ENCODE measurements at regions of chr2 and their contacts with region 1.

Region 1: GRCh38 chr2:25376750-25377621 is 35.3 kb upstream of the DNMT3A start:
- DNase-seq: peak; percentile 90
- ATAC-seq: peak; percentile 98
- H3K4me3 Mint-ChIP-seq: peak overlapping the region; percentile 73
- H3K27ac Mint-ChIP-seq: peak overlapping the region; percentile 90
- H3K4me1 Mint-ChIP-seq: peaks cover 35% of the 10 kb centered on the region
- H3K27me3 Mint-ChIP-seq: no peaks in the 10 kb centered on the region
- CTCF ChIP-seq: no peak

Region 2: DNA sequence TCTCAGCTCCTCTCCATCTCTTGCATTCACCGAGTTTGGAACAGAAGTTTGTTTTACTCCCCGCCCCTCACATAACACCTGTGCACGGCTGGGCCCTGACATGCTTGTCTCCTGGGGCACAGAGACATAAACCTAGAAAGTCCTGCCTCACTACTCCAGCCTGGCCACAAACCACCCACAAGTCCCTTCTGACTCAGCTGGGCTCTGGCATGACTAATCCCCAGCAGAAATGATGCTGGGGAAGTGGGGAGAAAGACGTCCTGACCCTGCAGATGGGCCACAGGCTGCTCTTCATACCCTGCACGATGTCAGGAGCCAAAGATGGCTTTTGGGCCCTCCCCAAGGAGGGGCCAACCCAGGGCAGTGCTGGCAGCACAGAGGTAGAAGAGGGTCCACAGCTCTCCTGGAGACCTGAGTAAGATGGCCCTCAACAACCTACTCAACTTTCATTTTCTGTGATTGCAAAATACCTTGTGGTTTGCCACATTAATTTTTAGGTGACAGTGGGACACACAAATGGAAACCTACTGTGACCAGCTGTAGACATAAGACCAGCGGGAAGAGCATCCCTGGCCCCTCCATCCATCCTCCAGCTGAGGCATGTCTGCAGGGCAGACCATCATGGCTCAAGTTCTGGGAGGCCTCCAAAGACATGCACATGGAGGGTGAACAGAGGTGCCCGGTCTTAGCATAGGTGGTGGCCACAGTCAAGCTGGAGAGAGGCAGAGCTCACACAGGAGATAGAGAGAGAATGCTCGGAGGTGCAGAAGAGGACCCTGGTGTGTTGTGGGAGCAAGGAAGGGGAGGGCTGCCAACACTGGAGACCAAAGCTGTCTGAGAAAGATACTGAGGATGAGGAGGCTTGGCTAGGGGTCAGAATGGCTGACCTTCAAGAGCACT is 75.3 kb before region 1 on chr2:
- CTCF ChIA-PET with region 1: interaction called, 4 read pairs
- POLR2A ChIA-PET with region 1: interaction called, 3 read pairs
- intact Hi-C with region 1: loop called (anchors 2 kb)
- DNase-seq: peak; percentile 61
- ATAC-seq: peak; percentile 95
- H3K4me3 Mint-ChIP-seq: peak overlapping the region; percentile 42
- H3K27ac Mint-ChIP-seq: peak overlapping the region; percentile 46
- H3K4me1 Mint-ChIP-seq: peaks cover 39% of the 10 kb centered on the region
- H3K27me3 Mint-ChIP-seq: no peaks in the 10 kb centered on the region
- CTCF ChIP-seq: no peak

Region 3: GRCh38 chr2:25342372-25343186 is 34.4 kb before region 1 on chr2:
- CTCF ChIA-PET with region 1: interaction called, 11 read pairs
- POLR2A ChIA-PET with region 1: interaction called, 7 read pairs
- intact Hi-C with region 1: loop called (anchors 1 kb)
- DNase-seq: peak; percentile 82
- ATAC-seq: peak; percentile 92
- H3K4me3 Mint-ChIP-seq: peak overlapping the region; percentile 84
- H3K27ac Mint-ChIP-seq: peak overlapping the region; percentile 59
- H3K4me1 Mint-ChIP-seq: peaks cover 19% of the 10 kb centered on the region
- H3K27me3 Mint-ChIP-seq: peaks cover 1% of the 10 kb centered on the region
- CTCF ChIP-seq: peak; percentile 74

Region 4: DNA sequence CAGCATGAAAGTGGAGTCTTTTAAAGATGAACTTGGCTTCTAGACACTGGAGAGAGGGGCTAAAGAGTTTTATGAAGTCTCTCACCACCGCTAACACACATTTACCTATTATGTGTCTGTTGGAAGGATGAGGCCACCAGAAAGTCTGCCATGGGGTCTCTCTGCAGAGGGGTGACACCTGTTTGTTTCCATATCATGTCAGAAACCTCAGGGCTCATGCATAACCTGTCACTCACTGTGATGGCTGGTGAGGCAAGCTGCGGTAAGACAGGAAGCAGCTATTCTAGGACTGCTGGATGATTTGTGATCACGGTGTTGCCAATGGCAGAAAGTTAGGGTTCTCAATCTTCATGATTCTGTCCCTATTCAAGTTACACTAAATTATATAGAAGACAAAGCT is 25.5 kb after region 1 on chr2:
- CTCF ChIA-PET with region 1: interaction called, 9 read pairs
- POLR2A ChIA-PET with region 1: interaction called, 11 read pairs
- intact Hi-C with region 1: loop called (anchors 1 kb)
- DNase-seq: no peak
- ATAC-seq: peak; percentile 5
- H3K4me3 Mint-ChIP-seq: no peak overlapping the region
- H3K27ac Mint-ChIP-seq: peak overlapping the region; percentile 95
- H3K4me1 Mint-ChIP-seq: peaks cover 88% of the 10 kb centered on the region
- H3K27me3 Mint-ChIP-seq: no peaks in the 10 kb centered on the region
- CTCF ChIP-seq: no peak

Region 5: DNA sequence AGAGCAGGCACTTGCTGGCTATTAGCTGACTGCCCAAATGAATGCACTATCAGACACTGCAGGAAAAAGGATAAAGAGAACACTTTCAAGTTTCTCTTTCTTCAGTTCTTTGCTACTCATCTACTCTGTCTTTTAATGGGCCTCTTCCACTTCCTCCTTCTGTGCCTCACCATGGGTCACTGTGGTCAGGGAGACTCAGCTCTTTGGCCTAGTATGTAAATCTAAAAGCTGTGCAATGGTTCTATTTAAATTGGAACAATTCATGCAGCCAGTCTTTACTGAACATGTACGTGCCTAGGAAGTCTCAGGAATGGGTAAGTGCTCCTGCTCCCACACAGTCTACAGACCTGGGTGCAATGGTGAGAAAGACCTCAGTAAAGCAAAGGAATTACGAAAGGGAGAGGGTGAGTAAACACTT is 43.8 kb after region 1 on chr2:
- CTCF ChIA-PET with region 1: interaction called, 32 read pairs
- POLR2A ChIA-PET with region 1: interaction called, 88 read pairs
- intact Hi-C with region 1: loop called (anchors 1 kb)
- DNase-seq: no peak
- ATAC-seq: peak; percentile 29
- H3K4me3 Mint-ChIP-seq: peak overlapping the region; percentile 93
- H3K27ac Mint-ChIP-seq: peak overlapping the region; percentile 95
- H3K4me1 Mint-ChIP-seq: peaks cover 97% of the 10 kb centered on the region
- H3K27me3 Mint-ChIP-seq: no peaks in the 10 kb centered on the region
- CTCF ChIP-seq: no peak

Region 6: GRCh38 chr2:25497918-25498407 is 121.0 kb after region 1 on chr2:
- CTCF ChIA-PET with region 1: no interaction called
- POLR2A ChIA-PET with region 1: interaction called, 3 read pairs
- intact Hi-C with region 1: loop called (anchors 1 kb)
- DNase-seq: no peak
- ATAC-seq: peak; percentile 78
- H3K4me3 Mint-ChIP-seq: peak overlapping the region; percentile 39
- H3K27ac Mint-ChIP-seq: peak overlapping the region; percentile 83
- H3K4me1 Mint-ChIP-seq: peaks cover 23% of the 10 kb centered on the region
- H3K27me3 Mint-ChIP-seq: no peaks in the 10 kb centered on the region
- CTCF ChIP-seq: no peak

Measured in activated B cell treated with CpG ODN at 0.5 μM for 24 hours (primary cell).